ENCODE measurements at regions of chr20 and their contacts with region 1.

Region 1: GRCh38 chr20:38165089-38165989 is at the start of gene TGM2:
- DNase-seq: peak; percentile 82 to 90
- ATAC-seq: peak; percentile 86 to 97 (median 92)
- H3K4me3 ChIP-seq: peak within 1 kb of the TSS; percentile 77
- H3K27ac ChIP-seq: peak within 1 kb of the TSS; percentile 72
- H3K4me1 ChIP-seq: peaks cover 12% of the 10 kb centered on the region
- H3K27me3 ChIP-seq: no peaks in the 10 kb centered on the region
- CTCF ChIP-seq: peak; percentile 89
- total RNA-seq, gene TGM2: 38.0 to 235 (median 134) TPM

Region 2: GRCh38 chr20:36214684-36215256 is 1950.6 kb before region 1 on chr20:
- intact Hi-C with region 1: no loop called
- DNase-seq: no peak
- ATAC-seq: peak in 2 of 4 donors; percentile 54 to 69
- H3K4me3 ChIP-seq: no peak overlapping the region
- H3K27ac ChIP-seq: no peak overlapping the region
- H3K4me1 ChIP-seq: no peaks in the 10 kb centered on the region
- H3K27me3 ChIP-seq: no peaks in the 10 kb centered on the region
- CTCF ChIP-seq: peak; percentile 48

Region 3: GRCh38 chr20:37758332-37758731 is 407.0 kb before region 1 on chr20:
- intact Hi-C with region 1: no loop called
- DNase-seq: no peak
- ATAC-seq: peak in 1 of 4 donors; percentile 25
- H3K4me3 ChIP-seq: no peak overlapping the region
- H3K27ac ChIP-seq: no peak overlapping the region
- H3K4me1 ChIP-seq: peaks cover 11% of the 10 kb centered on the region
- H3K27me3 ChIP-seq: no peaks in the 10 kb centered on the region
- CTCF ChIP-seq: no peak

Region 4: DNA sequence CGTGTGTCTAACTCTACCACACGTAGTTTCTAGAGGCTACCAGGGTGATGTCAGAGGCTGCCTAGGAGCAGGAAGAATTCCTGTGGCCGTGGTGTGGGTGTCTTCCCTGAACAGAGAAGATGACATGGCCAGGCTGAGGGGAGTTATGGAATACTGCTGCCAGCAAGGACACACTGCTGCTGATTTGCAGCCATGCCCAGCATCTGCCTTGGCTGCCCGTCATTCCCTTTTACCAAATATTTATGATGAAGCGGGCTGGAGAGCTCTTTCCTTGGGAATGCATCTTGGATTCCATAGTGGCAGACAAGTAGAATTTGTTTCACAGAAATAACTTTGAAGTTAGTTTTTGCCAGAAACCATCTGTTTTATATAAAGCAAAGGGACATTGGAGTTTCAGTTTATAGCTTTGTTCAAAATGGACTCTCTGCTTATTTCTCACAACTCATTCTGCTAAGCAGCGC is 343.2 kb before region 1 on chr20:
- intact Hi-C with region 1: no loop called
- DNase-seq: no peak
- ATAC-seq: no peak
- H3K4me3 ChIP-seq: no peak overlapping the region
- H3K27ac ChIP-seq: no peak overlapping the region
- H3K4me1 ChIP-seq: no peaks in the 10 kb centered on the region
- H3K27me3 ChIP-seq: no peaks in the 10 kb centered on the region
- CTCF ChIP-seq: no peak

Region 5: GRCh38 chr20:37901654-37902503 is 263.5 kb before region 1 on chr20:
- intact Hi-C with region 1: loop called in 1 of 2 experiments (anchors 10 kb)
- DNase-seq: no peak
- ATAC-seq: peak; percentile 42 to 77 (median 64)
- H3K4me3 ChIP-seq: peak overlapping the region; percentile 62
- H3K27ac ChIP-seq: no peak overlapping the region
- H3K4me1 ChIP-seq: peaks cover 6% of the 10 kb centered on the region
- H3K27me3 ChIP-seq: peaks cover 0 to 57% (median 31%) of the 10 kb centered on the region in 3 donors
- CTCF ChIP-seq: peak; percentile 34

Region 6: DNA sequence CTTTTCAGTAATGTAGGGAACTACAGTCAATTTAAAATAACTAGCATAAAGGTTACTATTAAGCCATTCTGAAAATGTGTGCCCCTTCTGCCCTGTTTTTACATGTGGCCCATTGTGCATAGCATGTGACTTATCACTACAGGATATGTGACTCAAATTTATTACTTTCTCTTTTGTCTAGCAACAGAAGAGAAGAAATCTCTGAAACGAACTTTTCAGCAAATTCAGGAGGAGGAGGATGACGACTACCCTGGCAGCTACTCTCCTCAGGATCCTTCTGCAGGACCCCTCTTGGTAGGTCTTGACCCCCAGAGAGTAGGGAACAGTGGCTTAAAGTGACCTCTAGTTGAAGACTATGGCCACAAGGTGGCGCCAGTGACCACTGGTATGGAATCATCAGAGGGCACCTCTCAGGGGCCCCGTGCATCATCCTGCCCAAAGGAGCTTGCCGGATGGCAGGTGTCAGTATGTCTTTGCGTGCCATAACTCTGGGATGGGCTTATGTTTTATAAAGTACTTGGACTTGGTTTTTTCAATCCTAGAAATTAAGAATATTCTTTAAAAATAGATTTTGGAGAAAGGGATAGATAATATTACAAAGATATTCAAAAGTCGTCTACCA is 107.9 kb before region 1 on chr20:
- intact Hi-C with region 1: loop called (anchors 1 to 2 kb)
- DNase-seq: peak; percentile 84 to 92
- ATAC-seq: peak; percentile 92 to 94 (median 94)
- H3K4me3 ChIP-seq: no peak overlapping the region
- H3K27ac ChIP-seq: peak overlapping the region; percentile 23
- H3K4me1 ChIP-seq: peaks cover 35% of the 10 kb centered on the region
- H3K27me3 ChIP-seq: no peaks in the 10 kb centered on the region
- CTCF ChIP-seq: peak; percentile 96

Region 7: DNA sequence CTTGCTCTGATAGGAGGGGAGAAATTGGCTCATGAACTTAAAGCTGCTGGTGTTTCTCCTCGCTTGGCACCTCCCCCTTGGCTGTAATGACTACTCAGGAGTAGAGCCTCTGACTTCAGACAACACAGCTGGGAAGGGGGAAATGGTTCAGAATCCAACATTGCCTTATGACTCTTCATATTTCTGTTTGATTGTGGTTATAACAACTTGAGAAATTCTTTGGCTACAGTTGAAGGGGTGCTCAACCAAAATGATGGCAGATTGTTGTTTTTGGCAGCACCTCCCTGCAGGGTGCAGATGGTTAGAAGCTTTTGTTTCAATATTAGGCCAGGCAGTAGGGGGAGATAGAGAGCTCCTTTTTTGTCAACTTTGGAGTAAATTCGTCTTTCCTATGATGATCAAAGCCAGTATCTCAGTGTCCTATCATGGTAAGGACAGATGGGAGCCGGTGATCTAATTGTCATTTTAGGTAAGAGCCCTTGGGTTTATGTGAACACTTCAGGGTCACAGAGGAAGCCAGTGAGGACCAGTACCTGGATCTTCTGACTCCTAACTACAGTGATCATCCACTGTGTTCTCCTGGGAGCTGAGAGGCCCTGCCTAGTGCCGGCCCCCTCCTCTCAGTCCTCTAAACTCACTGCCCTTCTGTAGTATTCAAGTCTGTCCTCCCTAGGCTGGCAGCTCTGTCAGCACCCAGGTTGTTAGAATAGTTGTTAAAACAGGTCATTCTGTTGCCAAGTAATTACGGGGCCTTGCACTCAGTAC is 91.8 kb before region 1 on chr20:
- intact Hi-C with region 1: loop called in 1 of 2 experiments (anchors 2 kb)
- DNase-seq: peak in 1 of 2 donors; percentile 58
- ATAC-seq: peak; percentile 55 to 68 (median 64)
- H3K4me3 ChIP-seq: no peak overlapping the region
- H3K27ac ChIP-seq: peak overlapping the region; percentile 80
- H3K4me1 ChIP-seq: peaks cover 40% of the 10 kb centered on the region
- H3K27me3 ChIP-seq: no peaks in the 10 kb centered on the region
- CTCF ChIP-seq: peak; percentile 60

Region 8: GRCh38 chr20:38113401-38114325 is 51.7 kb before region 1 on chr20:
- intact Hi-C with region 1: loop called in 1 of 2 experiments (anchors 2 kb)
- DNase-seq: no peak
- ATAC-seq: peak; percentile 17 to 60 (median 26)
- H3K4me3 ChIP-seq: no peak overlapping the region
- H3K27ac ChIP-seq: peak overlapping the region; percentile 58
- H3K4me1 ChIP-seq: peaks cover 60% of the 10 kb centered on the region
- H3K27me3 ChIP-seq: no peaks in the 10 kb centered on the region
- CTCF ChIP-seq: no peak

Region 9: DNA sequence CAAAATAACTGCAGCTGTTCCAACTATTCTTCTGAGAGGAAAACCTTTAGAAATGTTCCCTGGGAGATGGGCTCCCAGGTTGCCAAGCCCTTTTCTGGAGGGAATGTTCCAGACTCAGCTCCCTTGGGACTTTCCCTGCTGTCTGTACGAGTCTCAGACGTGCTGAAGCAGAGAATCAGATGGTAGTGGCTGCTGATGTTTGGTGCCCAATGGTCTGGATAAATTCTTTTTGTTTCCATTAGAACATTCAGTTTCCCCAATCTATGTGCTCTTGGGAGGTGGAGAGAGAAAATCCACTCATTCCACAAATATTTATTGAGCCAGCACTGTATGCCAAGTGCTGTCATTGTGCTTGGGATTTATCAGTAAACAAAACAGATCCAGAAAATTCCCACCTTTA is 229.8 kb after region 1 on chr20:
- intact Hi-C with region 1: no loop called
- DNase-seq: no peak
- ATAC-seq: no peak
- H3K4me3 ChIP-seq: no peak overlapping the region
- H3K27ac ChIP-seq: no peak overlapping the region
- H3K4me1 ChIP-seq: no peaks in the 10 kb centered on the region
- H3K27me3 ChIP-seq: no peaks in the 10 kb centered on the region
- CTCF ChIP-seq: no peak

Measured in psoas muscle (tissue), 8 donors.